ENCODE measurements at regions of chr10 and their contacts with region 1.

Region 1: DNA sequence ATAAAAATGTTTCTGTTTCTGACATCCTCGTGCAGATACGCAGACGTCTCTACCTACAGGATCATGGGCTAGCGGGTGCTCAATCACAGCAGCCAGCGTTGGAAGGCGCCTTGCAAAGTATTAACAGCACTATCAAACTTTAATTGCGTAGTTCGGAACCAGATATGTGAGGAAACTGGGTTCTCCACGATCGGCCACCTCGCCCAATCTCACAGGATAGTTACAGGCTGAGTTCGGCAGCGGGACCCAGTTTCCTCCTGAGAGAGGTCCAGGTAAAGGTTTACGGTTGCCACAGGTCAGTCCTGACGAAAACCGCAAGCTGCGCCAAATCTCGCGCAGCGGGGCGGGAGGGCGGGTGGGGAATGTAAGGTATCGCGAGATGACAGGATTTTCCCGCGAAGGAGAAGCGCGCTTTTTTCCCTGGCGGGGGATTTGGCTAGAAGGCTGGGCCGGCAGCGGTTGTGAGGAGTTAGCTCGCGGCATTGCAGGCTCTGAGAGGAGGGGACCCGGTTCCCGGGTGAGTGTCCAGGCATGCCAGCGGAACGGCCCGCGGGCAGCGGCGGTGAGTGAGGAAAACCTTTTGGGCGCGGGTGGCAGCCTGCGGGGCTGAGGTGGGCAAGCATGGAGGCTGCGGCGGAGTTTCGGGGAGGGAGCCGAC is at the start of gene HELLS:
- DNase-seq: peak; percentile 30 to 76 (median 63)
- ATAC-seq: peak; percentile 75
- H3K4me3 ChIP-seq: peak within 1 kb of the TSS; percentile 71
- H3K4me3 Mint-ChIP-seq: peak within 1 kb of the TSS; percentile 89 to 97 (median 94)
- H3K27ac ChIP-seq: peak within 1 kb of the TSS; percentile 63
- H3K27ac Mint-ChIP-seq: peak within 1 kb of the TSS; percentile 75 to 97 (median 87)
- H3K4me1 ChIP-seq: peaks cover 3 to 8% of the 10 kb centered on the region in 2 donors
- H3K4me1 Mint-ChIP-seq: peaks cover 15 to 32% (median 26%) of the 10 kb centered on the region in 7 donors
- H3K27me3 ChIP-seq: no peaks in the 10 kb centered on the region
- H3K27me3 Mint-ChIP-seq: peaks cover 0 to 28% (median 10%) of the 10 kb centered on the region in 5 donors
- total RNA-seq, gene HELLS: 5.4 to 107 (median 7.4) TPM

Region 2: GRCh38 chr10:93893646-93894515 is 651.6 kb before region 1 on chr10 and contains the start of gene SLC35G1:
- CTCF ChIA-PET with region 1: no interaction called
- POLR2A ChIA-PET with region 1: no interaction called
- intact Hi-C with region 1: loop called in 1 of 2 experiments (anchors 10 kb)
- DNase-seq: peak; percentile 48 to 75 (median 66)
- ATAC-seq: peak; percentile 89
- H3K4me3 ChIP-seq: peak within 1 kb of the TSS; percentile 72
- H3K4me3 Mint-ChIP-seq: peak within 1 kb of the TSS; percentile 81 to 91 (median 86)
- H3K27ac ChIP-seq: peak within 1 kb of the TSS; percentile 62
- H3K27ac Mint-ChIP-seq: peak within 1 kb of the TSS; percentile 56 to 81 (median 74)
- H3K4me1 ChIP-seq: peaks cover 6 to 18% of the 10 kb centered on the region in 2 donors
- H3K4me1 Mint-ChIP-seq: peaks cover 23 to 47% (median 40%) of the 10 kb centered on the region in 7 donors
- H3K27me3 ChIP-seq: no peaks in the 10 kb centered on the region
- H3K27me3 Mint-ChIP-seq: peaks cover 0 to 9% (median 7%) of the 10 kb centered on the region in 5 donors
- total RNA-seq, gene SLC35G1: 2.4 to 7.2 (median 3.5) TPM

Region 3: DNA sequence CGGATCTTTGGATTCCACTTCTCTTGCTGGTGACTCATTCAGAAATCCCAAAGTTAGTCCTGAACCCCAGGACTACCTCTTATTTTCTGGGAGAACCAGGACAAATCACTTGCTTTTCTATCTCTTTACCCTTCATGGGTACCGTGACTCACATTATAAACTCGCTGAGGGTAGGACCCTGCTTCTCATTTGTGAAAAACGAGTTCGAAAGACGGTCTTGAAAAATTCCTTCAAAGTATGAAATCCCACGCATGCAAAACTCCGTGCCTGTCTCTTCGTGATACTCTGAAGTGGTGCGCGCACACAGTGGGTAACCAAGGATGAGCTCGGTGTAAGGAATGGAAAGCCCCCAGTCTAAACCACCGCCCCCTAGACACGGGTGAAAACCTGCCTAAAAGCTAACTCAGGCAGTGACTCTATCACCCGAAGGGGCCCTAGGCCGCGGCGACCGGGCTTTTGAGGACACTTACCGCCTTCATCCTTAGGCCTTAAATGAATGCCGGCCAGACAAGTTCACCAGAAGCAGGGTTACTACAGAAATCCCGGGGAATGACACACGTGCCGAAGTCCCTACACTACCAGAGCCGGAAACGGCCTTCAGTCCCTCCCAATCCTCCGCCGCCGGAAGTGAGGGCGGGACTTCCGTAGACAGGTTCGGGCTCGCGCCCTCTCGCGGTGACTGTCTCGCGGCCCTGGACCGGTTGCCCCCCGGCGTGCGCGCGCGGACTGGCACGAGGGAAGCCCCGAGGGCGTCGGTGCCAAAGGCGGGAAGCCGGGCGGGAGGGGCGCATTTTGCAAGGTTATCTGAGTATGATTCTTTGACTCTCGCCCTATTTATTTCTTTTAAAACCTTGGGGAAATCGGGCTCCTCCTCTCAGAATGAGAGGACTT is 182.9 kb before region 1 on chr10 and contains the start of gene NOC3L:
- CTCF ChIA-PET with region 1: no interaction called
- POLR2A ChIA-PET with region 1: no interaction called
- intact Hi-C with region 1: loop called (anchors 2 kb)
- DNase-seq: peak; percentile 85 to 96 (median 91)
- ATAC-seq: peak; percentile 97
- H3K4me3 ChIP-seq: peak within 1 kb of the TSS; percentile 76
- H3K4me3 Mint-ChIP-seq: peak within 1 kb of the TSS; percentile 93 to 98 (median 96)
- H3K27ac ChIP-seq: peak within 1 kb of the TSS; percentile 92
- H3K27ac Mint-ChIP-seq: peak within 1 kb of the TSS; percentile 90 to 99 (median 97)
- H3K4me1 ChIP-seq: peaks cover 13 to 18% of the 10 kb centered on the region in 2 donors
- H3K4me1 Mint-ChIP-seq: peaks cover 20 to 54% (median 42%) of the 10 kb centered on the region in 7 donors
- H3K27me3 ChIP-seq: no peaks in the 10 kb centered on the region
- H3K27me3 Mint-ChIP-seq: peaks cover 0 to 14% (median 9%) of the 10 kb centered on the region in 5 donors
- total RNA-seq, gene NOC3L: 8.6 to 28.8 (median 24.8) TPM

Region 4: GRCh38 chr10:94402015-94402842 is 143.3 kb before region 1 on chr10 and contains the start of gene TBC1D12:
- CTCF ChIA-PET with region 1: no interaction called
- POLR2A ChIA-PET with region 1: no interaction called
- intact Hi-C with region 1: loop called in 1 of 2 experiments (anchors 5 kb)
- DNase-seq: peak in 5 of 9 donors; percentile 7 to 44 (median 20)
- ATAC-seq: peak; percentile 67
- H3K4me3 ChIP-seq: peak within 1 kb of the TSS; percentile 43
- H3K4me3 Mint-ChIP-seq: peak within 1 kb of the TSS; percentile 54 to 90 (median 82)
- H3K27ac ChIP-seq: no peak within 1 kb of the TSS
- H3K27ac Mint-ChIP-seq: no peak within 1 kb of the TSS
- H3K4me1 ChIP-seq: no peaks in the 10 kb centered on the region
- H3K4me1 Mint-ChIP-seq: peaks cover 0 to 12% (median 9%) of the 10 kb centered on the region in 7 donors
- H3K27me3 ChIP-seq: peaks cover 4 to 19% of the 10 kb centered on the region in 2 donors
- H3K27me3 Mint-ChIP-seq: peaks cover 48 to 78% (median 74%) of the 10 kb centered on the region in 5 donors
- total RNA-seq, gene TBC1D12: 0.22 to 3.6 (median 0.60) TPM

Region 5: GRCh38 chr10:94762393-94762792 is 216.9 kb after region 1 on chr10 and contains the start of gene CYP2C19:
- CTCF ChIA-PET with region 1: no interaction called
- POLR2A ChIA-PET with region 1: no interaction called
- intact Hi-C with region 1: no loop called
- DNase-seq: no peak
- ATAC-seq: no peak
- H3K4me3 ChIP-seq: no peak within 1 kb of the TSS
- H3K4me3 Mint-ChIP-seq: no peak within 1 kb of the TSS
- H3K27ac ChIP-seq: no peak within 1 kb of the TSS
- H3K27ac Mint-ChIP-seq: no peak within 1 kb of the TSS
- H3K4me1 ChIP-seq: no peaks in the 10 kb centered on the region
- H3K4me1 Mint-ChIP-seq: no peaks in the 10 kb centered on the region
- H3K27me3 ChIP-seq: no peaks in the 10 kb centered on the region
- H3K27me3 Mint-ChIP-seq: no peaks in the 10 kb centered on the region
- total RNA-seq, gene CYP2C19: not detected